Activated CD4-positive, alpha-beta T cell treated with anti-CD3 and anti-CD28 coated beads, Interleukin-2, amount 10 ng/mL, durations not matched to agents 24 days and 14 days (primary cell): ENCODE measurements at regions of chr4 and their contacts with region 1.

Region 1: GRCh38 chr4:113623274-113623894 is 138.2 kb downstream of the CAMK2D start:
- DNase-seq: no peak
- H3K4me3 Mint-ChIP-seq: no peak overlapping the region
- H3K27ac Mint-ChIP-seq: no peak overlapping the region
- H3K4me1 Mint-ChIP-seq: peaks cover 27% of the 10 kb centered on the region
- H3K27me3 Mint-ChIP-seq: no peaks in the 10 kb centered on the region

Region 2: GRCh38 chr4:112296949-112297880 is 1326.2 kb before region 1 on chr4 and contains the start of gene ALPK1:
- intact Hi-C with region 1: no loop called
- DNase-seq: peak; percentile 76
- H3K4me3 Mint-ChIP-seq: peak within 1 kb of the TSS; percentile 89
- H3K27ac Mint-ChIP-seq: peak within 1 kb of the TSS; percentile 89
- H3K4me1 Mint-ChIP-seq: peaks cover 30% of the 10 kb centered on the region
- H3K27me3 Mint-ChIP-seq: no peaks in the 10 kb centered on the region
- total RNA-seq, gene ALPK1: 8.8 and 9.1 TPM in 2 replicates

Region 3: DNA sequence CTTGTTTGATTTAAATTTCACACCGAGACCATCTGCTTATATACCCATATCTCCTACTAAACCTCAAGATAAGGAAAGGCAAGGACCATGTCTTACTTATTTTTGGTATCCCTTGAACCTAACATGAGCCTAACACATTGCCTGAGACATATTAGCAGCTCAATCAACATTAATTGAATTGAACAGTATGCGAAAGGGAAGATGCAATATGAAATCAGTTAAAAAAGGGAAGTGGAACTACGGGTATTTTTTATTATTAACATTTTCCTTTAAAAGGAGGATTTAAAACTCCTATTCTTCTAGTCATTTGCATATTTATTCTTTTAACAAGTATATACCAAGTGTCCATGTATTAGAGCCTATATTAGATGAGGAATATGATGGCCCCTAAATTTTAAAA is 58.9 kb before region 1 on chr4:
- intact Hi-C with region 1: loop called (anchors 5 kb)
- DNase-seq: no peak
- H3K4me3 Mint-ChIP-seq: peak overlapping the region; percentile 64
- H3K27ac Mint-ChIP-seq: no peak overlapping the region
- H3K4me1 Mint-ChIP-seq: peaks cover 40% of the 10 kb centered on the region
- H3K27me3 Mint-ChIP-seq: no peaks in the 10 kb centered on the region

Region 4: GRCh38 chr4:113584407-113585150 is 38.8 kb before region 1 on chr4:
- intact Hi-C with region 1: loop called (anchors 5 kb)
- DNase-seq: no peak
- H3K4me3 Mint-ChIP-seq: no peak overlapping the region
- H3K27ac Mint-ChIP-seq: no peak overlapping the region
- H3K4me1 Mint-ChIP-seq: peaks cover 28% of the 10 kb centered on the region
- H3K27me3 Mint-ChIP-seq: no peaks in the 10 kb centered on the region

Region 5: DNA sequence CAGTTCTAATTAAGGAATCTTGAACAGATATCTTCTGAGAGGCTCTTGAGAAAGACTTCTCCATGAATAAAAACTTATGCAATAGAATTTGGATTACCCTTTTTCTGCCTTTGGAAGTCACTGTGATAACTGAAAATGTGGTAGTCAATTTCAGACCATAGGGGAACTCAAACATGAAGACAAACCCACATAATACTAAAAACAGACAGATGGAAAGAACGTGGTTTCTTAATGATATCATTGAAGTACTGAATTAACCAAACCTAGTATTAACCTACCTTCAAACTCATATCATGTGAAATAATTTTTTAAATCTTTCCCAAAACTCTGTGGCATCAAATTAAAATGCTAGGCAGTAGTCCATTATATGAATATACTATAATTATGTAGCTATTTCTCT is 15.4 kb before region 1 on chr4:
- intact Hi-C with region 1: loop called (anchors 1 kb)
- DNase-seq: no peak
- H3K4me3 Mint-ChIP-seq: no peak overlapping the region
- H3K27ac Mint-ChIP-seq: peak overlapping the region; percentile 35
- H3K4me1 Mint-ChIP-seq: peaks cover 18% of the 10 kb centered on the region
- H3K27me3 Mint-ChIP-seq: no peaks in the 10 kb centered on the region

Region 6: GRCh38 chr4:113666386-113667114 is 43.2 kb after region 1 on chr4:
- intact Hi-C with region 1: no loop called
- DNase-seq: no peak
- H3K4me3 Mint-ChIP-seq: no peak overlapping the region
- H3K27ac Mint-ChIP-seq: no peak overlapping the region
- H3K4me1 Mint-ChIP-seq: peaks cover 10% of the 10 kb centered on the region
- H3K27me3 Mint-ChIP-seq: no peaks in the 10 kb centered on the region